ENCODE measurements at regions of chr1 and their contacts with region 1.

Region 1: GRCh38 chr1:185559684-185560331 is 174.4 kb upstream of the HMCN1 start:
- DNase-seq: no peak
- ATAC-seq: peak; percentile 87

Region 2: DNA sequence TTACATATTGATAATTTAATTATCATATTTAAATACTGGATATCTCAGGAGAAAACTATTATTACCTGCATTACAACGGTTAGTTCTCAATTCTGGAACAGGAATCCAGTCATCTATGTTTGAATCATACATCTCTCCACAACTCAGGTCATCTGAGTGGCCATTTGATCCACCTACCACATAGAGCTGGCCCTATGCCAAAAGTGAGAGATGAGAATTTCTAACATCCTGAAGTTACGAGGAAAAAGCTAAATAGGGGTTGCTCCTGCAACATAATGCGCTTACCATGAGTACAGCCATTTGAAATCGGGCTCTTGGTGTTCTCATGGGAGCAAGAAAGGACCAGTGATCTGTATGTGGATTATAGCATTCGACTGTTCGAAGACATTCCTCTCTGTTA is 259.7 kb before region 1 on chr1:
- intact Hi-C with region 1: loop called (anchors 5 kb)
- DNase-seq: no peak
- ATAC-seq: no peak

Region 3: GRCh38 chr1:185690527-185690926 is 130.7 kb after region 1 on chr1:
- intact Hi-C with region 1: no loop called
- DNase-seq: no peak
- ATAC-seq: no peak

Measured in sciatic nerve (tissue), 2 donors.